ENCODE measurements at regions of chr3 and their contacts with region 1.

Region 1: GRCh38 chr3:196432137-196432879 is at the start of gene UBXN7:
- DNase-seq: peak; percentile 97
- ATAC-seq: peak; percentile 98
- total RNA-seq, gene UBXN7: 31.1 TPM

Region 2: GRCh38 chr3:196251918-196252317 is 180.4 kb before region 1 on chr3:
- intact Hi-C with region 1: loop called (anchors 5 kb)
- DNase-seq: no peak
- ATAC-seq: no peak

Region 3: DNA sequence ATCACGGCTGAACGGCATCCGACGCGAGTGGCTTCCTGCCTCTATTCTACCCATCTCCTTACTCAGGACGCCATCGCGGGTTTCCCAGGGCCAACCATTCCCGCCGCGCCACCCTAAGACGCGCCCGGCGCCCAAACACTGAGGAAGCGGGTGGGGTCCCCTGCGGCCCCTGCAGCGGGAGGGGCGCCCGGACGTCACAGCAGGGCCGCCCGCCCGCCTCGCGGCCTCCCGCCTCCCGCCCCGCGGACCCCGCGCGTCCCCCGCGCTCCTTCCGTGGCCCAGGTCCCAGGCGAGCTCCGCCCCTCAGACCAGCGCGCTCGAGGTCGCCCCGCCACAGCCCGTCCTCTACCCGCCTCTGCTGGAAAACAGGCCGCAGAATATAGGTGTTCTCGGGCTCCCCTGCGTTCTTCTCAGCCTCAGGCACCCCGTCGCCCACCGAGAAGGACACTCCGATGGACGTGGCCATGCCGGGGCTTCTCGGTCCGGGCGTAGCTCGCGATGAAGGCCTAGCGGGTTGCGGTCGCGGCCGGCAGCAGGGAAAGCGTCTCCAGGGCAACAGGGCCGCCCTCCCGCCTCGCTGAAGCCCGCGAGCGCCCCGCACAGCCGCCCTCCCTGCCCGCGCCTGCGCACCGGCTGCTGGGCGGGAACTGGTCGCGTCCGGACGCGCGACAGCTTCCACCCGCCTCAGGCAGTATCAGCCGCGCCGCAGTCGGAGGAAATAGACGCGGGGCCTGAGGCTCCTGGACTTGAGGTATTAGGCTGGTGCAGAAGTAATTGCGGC is 114.4 kb before region 1 on chr3 and contains the start of gene DYNLT2B:
- intact Hi-C with region 1: loop called (anchors 5 kb)
- DNase-seq: peak; percentile 94
- ATAC-seq: peak; percentile 99
- total RNA-seq, gene DYNLT2B: 2.9 TPM

Region 4: GRCh38 chr3:196502775-196503195 is 70.5 kb after region 1 on chr3:
- intact Hi-C with region 1: loop called (anchors 5 kb)
- DNase-seq: no peak
- ATAC-seq: peak; percentile 46